Uterus (tissue), 4 donors: ENCODE measurements at regions of chr14 and their contacts with region 1.

Region 1: DNA sequence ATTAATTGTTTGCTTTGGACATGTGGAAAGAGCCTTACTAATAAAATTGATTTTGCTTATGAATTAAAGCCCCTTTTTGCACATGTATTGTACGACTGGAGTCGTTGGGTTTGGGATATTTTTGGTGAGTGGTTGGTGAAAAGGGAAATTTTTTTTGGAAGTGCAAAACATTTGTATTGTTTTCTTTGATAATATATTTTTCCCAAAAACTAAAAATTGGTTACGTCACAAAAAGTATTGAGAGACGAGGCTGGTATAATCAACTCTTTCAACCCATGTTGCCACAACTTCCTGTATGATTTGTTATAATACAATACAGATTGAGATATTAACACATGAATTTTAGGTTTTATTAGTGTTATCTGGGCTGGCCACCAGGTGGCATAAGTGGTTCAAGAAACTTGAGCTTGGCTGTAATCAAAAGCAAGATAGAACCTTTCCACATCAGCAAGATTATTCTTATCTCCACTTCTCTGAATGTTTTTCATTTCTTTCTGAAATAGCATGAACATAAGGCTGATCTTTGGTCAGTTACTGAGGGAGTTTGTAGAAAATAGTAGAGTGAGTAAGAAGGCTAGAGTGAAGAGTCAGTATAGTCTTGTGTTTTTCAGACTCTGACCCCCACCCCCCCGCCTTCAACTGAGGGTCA is 8.7 kb downstream of the NGDN start:
- DNase-seq: peak; percentile 43 to 44
- H3K4me3 ChIP-seq: no peak overlapping the region
- H3K27ac ChIP-seq: no peak overlapping the region
- H3K4me1 ChIP-seq: no peaks in the 10 kb centered on the region
- H3K27me3 ChIP-seq: no peaks in the 10 kb centered on the region
- CTCF ChIP-seq: peak; percentile 61 to 82 (median 69)
- POLR2A ChIP-seq: no peak

Region 2: DNA sequence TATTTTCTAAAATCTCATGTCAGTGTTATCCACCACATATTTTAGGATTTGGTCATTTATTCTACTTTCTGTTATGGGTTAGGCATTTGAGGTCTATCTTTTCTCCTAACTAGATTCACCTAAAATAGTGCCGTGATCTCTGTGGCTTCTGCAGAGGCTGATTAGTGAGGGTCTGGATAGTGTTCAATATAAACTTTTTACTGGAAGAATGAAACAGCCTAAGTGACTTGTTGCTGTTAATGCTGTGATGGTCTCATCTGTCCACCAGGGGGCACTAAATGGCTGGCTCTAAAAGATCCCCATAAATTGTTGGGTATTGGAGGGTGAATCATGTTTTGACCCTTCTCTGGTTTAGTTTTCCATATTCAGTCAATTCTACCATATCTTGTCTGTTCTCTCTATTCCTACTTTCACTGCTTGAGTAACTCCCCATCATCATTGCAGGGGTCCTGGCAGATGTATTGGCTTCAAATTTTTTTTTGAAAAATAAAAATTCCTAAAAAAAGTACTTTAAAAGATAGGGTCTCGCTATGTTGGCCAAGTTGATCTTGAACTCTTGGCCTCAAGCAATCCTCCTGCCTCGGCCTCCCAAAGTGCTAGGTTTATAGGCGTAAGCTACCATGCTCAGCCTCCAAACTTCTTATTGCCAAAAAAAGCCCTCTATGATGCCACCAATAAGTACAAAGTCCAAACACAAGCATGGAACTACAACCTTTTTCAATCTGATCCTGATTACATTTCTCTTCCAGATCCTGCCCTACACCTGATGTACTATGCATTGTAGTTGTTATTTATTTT is 150.1 kb before region 1 on chr14:
- intact Hi-C with region 1: no loop called
- DNase-seq: peak; percentile 66 to 83
- H3K4me3 ChIP-seq: no peak overlapping the region
- H3K27ac ChIP-seq: no peak overlapping the region
- H3K4me1 ChIP-seq: peaks cover under 1 to 8% of the 10 kb centered on the region in 2 donors
- H3K27me3 ChIP-seq: no peaks in the 10 kb centered on the region
- CTCF ChIP-seq: peak; percentile 81 to 86 (median 84)
- POLR2A ChIP-seq: no peak

Region 3: GRCh38 chr14:23562268-23563203 is 84.3 kb after region 1 on chr14:
- intact Hi-C with region 1: loop called (anchors 5 kb)
- DNase-seq: no peak
- H3K4me3 ChIP-seq: no peak overlapping the region
- H3K27ac ChIP-seq: no peak overlapping the region
- H3K4me1 ChIP-seq: no peaks in the 10 kb centered on the region
- H3K27me3 ChIP-seq: no peaks in the 10 kb centered on the region
- CTCF ChIP-seq: peak; percentile 75 to 87 (median 79)
- POLR2A ChIP-seq: no peak

Region 4: GRCh38 chr14:23577004-23577681 is 98.9 kb after region 1 on chr14:
- intact Hi-C with region 1: no loop called
- DNase-seq: peak in 1 of 2 donors; percentile 47
- H3K4me3 ChIP-seq: peak overlapping the region; percentile 39 to 52
- H3K27ac ChIP-seq: peak overlapping the region; percentile 73 to 76
- H3K4me1 ChIP-seq: no peaks in the 10 kb centered on the region
- H3K27me3 ChIP-seq: peaks cover 0 to 4% of the 10 kb centered on the region in 2 donors
- CTCF ChIP-seq: no peak
- POLR2A ChIP-seq: no peak